Activated CD4-positive, alpha-beta memory T cell treated with anti-CD3 and anti-CD28 coated beads, Interleukin-2, amount 10 ng/mL, durations not matched to agents 7 days and 5 days (primary cell): ENCODE measurements at regions of chr2 and their contacts with region 1.

Region 1: GRCh38 chr2:106582148-106583143 is 95.3 kb downstream of the CD8B2 start:
- DNase-seq: peak; percentile 64
- H3K4me3 Mint-ChIP-seq: peak overlapping the region; percentile 79
- H3K27ac Mint-ChIP-seq: no peak overlapping the region
- H3K4me1 Mint-ChIP-seq: peaks cover 12% of the 10 kb centered on the region
- H3K27me3 Mint-ChIP-seq: peaks cover 46% of the 10 kb centered on the region

Region 2: DNA sequence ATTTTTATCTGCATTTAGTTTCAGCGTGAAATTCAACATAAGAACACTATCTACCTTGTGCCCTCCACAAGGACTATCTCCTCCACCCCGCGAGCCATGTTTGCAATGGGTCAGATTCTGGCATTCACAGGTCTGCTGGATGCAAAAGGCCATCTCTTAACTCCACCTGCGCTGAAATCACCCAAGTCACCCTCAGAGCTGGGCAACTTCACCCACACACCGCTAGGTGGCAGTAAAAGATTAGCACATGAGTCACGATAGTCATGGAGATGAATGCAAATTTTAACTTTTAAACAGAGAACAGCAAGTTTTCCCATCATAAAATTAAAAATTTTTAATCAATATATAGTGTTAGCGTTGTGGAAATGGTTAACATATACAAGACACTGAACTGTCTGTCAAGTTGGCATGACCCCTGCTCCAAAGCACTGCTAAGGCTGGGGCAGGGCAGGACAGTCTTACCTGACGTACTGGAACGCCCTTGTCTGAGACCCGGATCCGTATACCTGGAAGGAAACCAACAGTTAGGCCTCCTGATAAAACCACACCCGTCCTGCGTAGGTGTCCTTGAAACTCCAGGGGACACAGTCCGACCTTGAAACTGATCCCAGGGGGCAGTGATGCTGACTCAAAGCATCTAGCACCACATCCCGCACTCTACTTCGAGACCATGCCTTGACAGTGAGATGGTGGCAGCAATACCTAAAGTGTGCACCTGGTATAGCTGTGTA is 477.9 kb before region 1 on chr2:
- CTCF ChIA-PET with region 1: interaction called, 11 read pairs
- POLR2A ChIA-PET with region 1: no interaction called
- DNase-seq: peak; percentile 70
- H3K4me3 Mint-ChIP-seq: no peak overlapping the region
- H3K27ac Mint-ChIP-seq: no peak overlapping the region
- H3K4me1 Mint-ChIP-seq: peaks cover 6% of the 10 kb centered on the region
- H3K27me3 Mint-ChIP-seq: no peaks in the 10 kb centered on the region

Region 3: DNA sequence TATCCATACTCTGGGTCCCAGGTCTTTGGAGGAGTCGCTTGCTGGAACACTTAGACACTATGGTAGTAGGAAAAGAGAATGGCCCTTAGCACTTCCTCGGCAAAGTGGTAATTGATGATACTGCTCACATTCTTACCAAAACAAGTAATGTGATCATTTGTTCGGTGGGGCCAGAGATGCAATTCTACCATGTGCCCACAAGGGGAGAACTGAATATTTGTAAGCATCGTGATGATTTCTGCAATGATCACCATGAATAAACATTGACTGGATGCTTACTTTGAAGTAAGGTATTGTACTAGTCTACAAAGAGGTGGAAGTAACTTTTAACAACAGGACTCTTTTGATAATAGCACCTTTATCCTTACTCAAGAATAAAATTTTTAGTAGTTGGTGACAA is 14.4 kb after region 1 on chr2:
- CTCF ChIA-PET with region 1: interaction called, 12 read pairs
- POLR2A ChIA-PET with region 1: no interaction called
- DNase-seq: no peak
- H3K4me3 Mint-ChIP-seq: no peak overlapping the region
- H3K27ac Mint-ChIP-seq: no peak overlapping the region
- H3K4me1 Mint-ChIP-seq: no peaks in the 10 kb centered on the region
- H3K27me3 Mint-ChIP-seq: peaks cover 19% of the 10 kb centered on the region

Region 4: DNA sequence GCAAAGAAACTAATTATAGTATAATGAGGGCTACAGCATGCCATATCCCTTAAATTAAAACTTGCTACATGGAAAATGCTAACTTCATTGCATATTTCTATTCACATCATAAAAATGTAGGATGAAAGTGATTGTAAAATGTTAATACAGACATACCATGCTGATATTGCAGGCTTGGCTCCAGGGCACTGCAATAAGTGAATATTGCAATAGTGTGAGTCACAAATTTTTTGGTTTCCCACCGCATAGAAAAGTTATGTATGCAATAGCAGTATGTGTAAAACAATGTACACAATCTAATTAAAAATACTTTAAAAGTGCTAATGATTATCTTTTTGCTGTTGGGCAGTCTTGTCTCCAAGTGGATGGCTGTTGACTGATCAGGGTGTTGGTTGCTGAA is 66.9 kb after region 1 on chr2:
- CTCF ChIA-PET with region 1: no interaction called
- POLR2A ChIA-PET with region 1: no interaction called
- DNase-seq: no peak
- H3K4me3 Mint-ChIP-seq: no peak overlapping the region
- H3K27ac Mint-ChIP-seq: no peak overlapping the region
- H3K4me1 Mint-ChIP-seq: no peaks in the 10 kb centered on the region
- H3K27me3 Mint-ChIP-seq: no peaks in the 10 kb centered on the region